ENCODE measurements at regions of chr3 and their contacts with region 1.

Region 1: GRCh38 chr3:32106280-32106928 is at the start of gene GPD1L:
- DNase-seq: peak; percentile 93
- H3K4me3 Mint-ChIP-seq: peak within 1 kb of the TSS; percentile 97
- H3K27ac Mint-ChIP-seq: peak within 1 kb of the TSS; percentile 89
- H3K4me1 Mint-ChIP-seq: peaks cover 28% of the 10 kb centered on the region
- H3K27me3 Mint-ChIP-seq: no peaks in the 10 kb centered on the region
- total RNA-seq, gene GPD1L: 16.3 and 16.6 TPM in 2 replicates

Region 2: GRCh38 chr3:31247850-31248562 is 858.4 kb before region 1 on chr3:
- intact Hi-C with region 1: loop called (anchors 10 kb)
- DNase-seq: no peak
- H3K4me3 Mint-ChIP-seq: no peak overlapping the region
- H3K27ac Mint-ChIP-seq: peak overlapping the region; percentile 75
- H3K4me1 Mint-ChIP-seq: peaks cover 51% of the 10 kb centered on the region
- H3K27me3 Mint-ChIP-seq: no peaks in the 10 kb centered on the region

Region 3: GRCh38 chr3:31918179-31919168 is 187.9 kb before region 1 on chr3:
- intact Hi-C with region 1: loop called (anchors 1 kb)
- DNase-seq: peak; percentile 4
- H3K4me3 Mint-ChIP-seq: peak overlapping the region; percentile 68
- H3K27ac Mint-ChIP-seq: peak overlapping the region; percentile 85
- H3K4me1 Mint-ChIP-seq: peaks cover 37% of the 10 kb centered on the region
- H3K27me3 Mint-ChIP-seq: no peaks in the 10 kb centered on the region

Region 4: DNA sequence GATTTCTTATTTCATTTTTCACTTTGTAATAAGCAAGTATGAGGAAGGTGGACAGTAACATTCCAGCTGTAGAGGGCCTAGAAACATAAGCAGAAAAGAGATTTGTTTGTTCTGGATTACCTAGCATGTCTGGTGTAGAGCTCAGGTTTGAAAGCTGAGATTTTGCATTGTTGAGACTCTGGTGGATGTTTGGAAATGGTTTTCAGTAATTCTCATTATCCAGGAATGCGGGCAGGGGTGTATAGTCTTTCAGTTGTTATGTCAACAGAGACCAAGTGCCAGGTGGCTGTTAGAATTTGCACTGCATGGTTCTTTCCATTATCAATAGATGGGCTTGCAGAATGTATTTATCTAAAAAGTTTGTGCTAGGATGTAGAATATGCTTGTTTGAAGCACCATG is 10.9 kb after region 1 on chr3:
- intact Hi-C with region 1: loop called (anchors 1 kb)
- DNase-seq: no peak
- H3K4me3 Mint-ChIP-seq: no peak overlapping the region
- H3K27ac Mint-ChIP-seq: no peak overlapping the region
- H3K4me1 Mint-ChIP-seq: peaks cover 34% of the 10 kb centered on the region
- H3K27me3 Mint-ChIP-seq: no peaks in the 10 kb centered on the region

Region 5: DNA sequence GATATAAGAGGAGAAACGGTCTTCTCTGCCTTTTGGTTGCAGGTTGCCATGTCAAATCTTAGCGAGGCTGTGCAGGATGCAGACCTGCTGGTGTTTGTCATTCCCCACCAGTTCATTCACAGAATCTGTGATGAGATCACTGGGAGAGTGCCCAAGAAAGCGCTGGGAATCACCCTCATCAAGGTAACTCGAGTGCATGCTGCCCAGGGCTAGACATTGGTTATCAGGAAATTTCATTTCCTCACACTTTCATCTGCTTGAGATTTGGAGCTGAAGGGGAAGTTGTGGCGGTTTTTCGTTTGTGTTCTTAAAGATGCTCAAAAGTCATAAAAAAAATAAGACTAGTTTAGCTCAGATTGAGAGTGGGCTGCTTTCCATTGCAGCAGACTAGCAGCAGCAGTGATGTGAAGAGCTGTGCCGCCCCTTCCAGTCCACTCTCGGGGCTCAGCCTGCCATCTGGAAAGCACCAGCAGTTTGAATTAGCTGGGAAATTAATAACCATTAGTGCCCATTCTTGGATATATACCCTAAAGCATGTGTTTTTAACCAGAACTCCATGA is 32.2 kb after region 1 on chr3:
- intact Hi-C with region 1: loop called (anchors 2 kb)
- DNase-seq: no peak
- H3K4me3 Mint-ChIP-seq: no peak overlapping the region
- H3K27ac Mint-ChIP-seq: no peak overlapping the region
- H3K4me1 Mint-ChIP-seq: peaks cover 28% of the 10 kb centered on the region
- H3K27me3 Mint-ChIP-seq: no peaks in the 10 kb centered on the region

Region 6: DNA sequence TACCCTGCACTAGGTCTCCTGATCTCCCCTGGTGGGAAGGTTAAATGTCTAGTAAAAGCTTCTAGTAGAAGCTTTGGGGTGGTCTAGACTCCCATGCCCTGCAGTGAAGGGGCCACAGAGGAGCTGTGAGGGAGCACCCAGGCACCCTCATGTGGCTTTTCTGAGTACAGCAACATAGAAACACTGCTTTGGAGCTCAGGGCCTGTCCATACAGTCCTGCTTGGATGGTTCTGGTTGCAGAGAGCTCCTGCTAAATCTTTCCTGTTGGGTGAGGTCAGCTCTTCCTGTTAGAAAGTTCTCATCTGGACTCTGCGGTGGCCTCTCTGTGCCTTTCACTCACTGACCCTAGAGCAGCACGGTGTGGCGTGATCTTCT is 47.8 kb after region 1 on chr3:
- intact Hi-C with region 1: no loop called
- DNase-seq: no peak
- H3K4me3 Mint-ChIP-seq: no peak overlapping the region
- H3K27ac Mint-ChIP-seq: no peak overlapping the region
- H3K4me1 Mint-ChIP-seq: no peaks in the 10 kb centered on the region
- H3K27me3 Mint-ChIP-seq: no peaks in the 10 kb centered on the region

Region 7: GRCh38 chr3:32570421-32571191 is 464.2 kb after region 1 on chr3 and contains the start of gene DYNC1LI1:
- intact Hi-C with region 1: loop called (anchors 1 kb)
- DNase-seq: peak; percentile 90
- H3K4me3 Mint-ChIP-seq: peak within 1 kb of the TSS; percentile 91
- H3K27ac Mint-ChIP-seq: peak within 1 kb of the TSS; percentile 88
- H3K4me1 Mint-ChIP-seq: peaks cover 22% of the 10 kb centered on the region
- H3K27me3 Mint-ChIP-seq: no peaks in the 10 kb centered on the region
- total RNA-seq, gene DYNC1LI1: 35.9 and 43.3 TPM in 2 replicates

Measured in activated T-helper 1 cell treated with anti-CD3 and anti-CD28 coated beads, Interleukin-12 subunit alpha, Interleukin-12 subunit beta, Interleukin-2, Interleukin-4 antibody, amounts not matched to agents 30 ng/mL and 10 ng/mL and 1 ng/mL, durations not matched to agents 14 hours and 24 hours and 36 hours (primary cell).